HEK293T (cell line): ENCODE measurements at regions of chr17 and their contacts with region 1.

Region 1: DNA sequence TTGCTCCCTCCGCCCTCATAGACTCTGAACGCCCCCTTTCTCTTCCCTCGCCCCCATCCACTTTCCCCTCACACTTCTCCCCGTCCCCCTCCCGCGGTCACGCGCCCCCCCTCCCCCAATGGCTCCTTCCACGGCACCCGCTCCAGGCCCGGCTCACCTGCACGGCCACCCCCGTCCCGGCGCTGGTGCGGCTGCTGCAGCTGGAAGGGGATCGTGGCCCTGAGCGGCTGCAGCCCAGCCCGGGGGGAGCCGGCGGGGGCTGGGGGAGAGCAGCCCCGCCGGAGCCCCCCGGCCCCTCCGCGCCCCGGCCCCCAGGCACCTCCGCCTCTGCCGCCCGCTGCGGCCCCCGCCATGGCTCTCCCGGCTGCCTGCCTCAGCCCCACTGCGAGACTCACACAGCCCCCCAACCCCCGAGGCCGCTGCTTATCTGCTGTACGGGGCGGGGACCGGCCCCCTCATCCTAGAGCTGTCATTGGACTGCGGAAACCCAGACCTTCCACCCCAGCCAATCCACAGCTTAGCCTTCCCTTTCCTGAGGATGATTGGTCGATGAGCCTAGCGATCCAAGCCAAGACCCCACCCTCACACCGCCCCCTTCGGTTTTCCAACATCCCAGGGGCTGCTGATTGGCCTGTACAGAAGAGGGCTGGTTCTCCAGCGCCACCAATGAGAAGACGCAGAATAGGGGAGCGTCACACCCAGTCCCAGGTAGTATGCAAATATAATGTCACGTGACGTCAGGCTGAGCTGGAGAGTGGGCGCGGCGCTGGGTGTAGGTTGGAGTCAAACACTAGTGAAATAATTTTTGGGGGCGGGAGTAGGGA is at the start of gene FAM117A:
- DNase-seq: peak; percentile 99

Region 2: GRCh38 chr17:49730078-49730784 is 33.7 kb before region 1 on chr17:
- CTCF ChIA-PET with region 1: no interaction called
- POLR2A ChIA-PET with region 1: no interaction called
- DNase-seq: no peak

Region 3: DNA sequence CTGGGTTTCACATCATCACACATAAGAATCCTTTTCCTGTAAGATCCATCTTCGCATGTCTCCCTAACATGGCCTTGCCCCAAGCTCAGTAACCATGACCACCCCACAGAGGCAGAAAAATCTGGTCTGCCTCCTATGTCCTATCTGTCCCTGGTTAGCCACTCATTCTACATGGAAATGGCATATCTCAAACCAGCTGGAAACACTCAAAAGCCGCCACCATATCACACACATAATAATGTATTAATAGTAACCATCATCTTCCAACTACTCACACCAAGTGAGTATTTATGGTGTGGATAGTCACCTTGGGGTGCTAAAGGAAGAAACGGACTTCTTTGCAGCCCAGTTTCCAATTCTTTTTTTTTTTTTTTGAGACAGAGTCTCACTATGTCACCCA is 11.4 kb before region 1 on chr17:
- CTCF ChIA-PET with region 1: interaction called, 3 read pairs
- POLR2A ChIA-PET with region 1: interaction called, 11 read pairs
- DNase-seq: no peak

Region 4: GRCh38 chr17:49783071-49783715 is 19.2 kb after region 1 on chr17:
- CTCF ChIA-PET with region 1: interaction called, 4 read pairs
- POLR2A ChIA-PET with region 1: interaction called, 20 read pairs
- DNase-seq: no peak